Common myeloid progenitor, CD34-positive (primary cell): ENCODE measurements at regions of chr21 and their contacts with region 1.

Region 1: DNA sequence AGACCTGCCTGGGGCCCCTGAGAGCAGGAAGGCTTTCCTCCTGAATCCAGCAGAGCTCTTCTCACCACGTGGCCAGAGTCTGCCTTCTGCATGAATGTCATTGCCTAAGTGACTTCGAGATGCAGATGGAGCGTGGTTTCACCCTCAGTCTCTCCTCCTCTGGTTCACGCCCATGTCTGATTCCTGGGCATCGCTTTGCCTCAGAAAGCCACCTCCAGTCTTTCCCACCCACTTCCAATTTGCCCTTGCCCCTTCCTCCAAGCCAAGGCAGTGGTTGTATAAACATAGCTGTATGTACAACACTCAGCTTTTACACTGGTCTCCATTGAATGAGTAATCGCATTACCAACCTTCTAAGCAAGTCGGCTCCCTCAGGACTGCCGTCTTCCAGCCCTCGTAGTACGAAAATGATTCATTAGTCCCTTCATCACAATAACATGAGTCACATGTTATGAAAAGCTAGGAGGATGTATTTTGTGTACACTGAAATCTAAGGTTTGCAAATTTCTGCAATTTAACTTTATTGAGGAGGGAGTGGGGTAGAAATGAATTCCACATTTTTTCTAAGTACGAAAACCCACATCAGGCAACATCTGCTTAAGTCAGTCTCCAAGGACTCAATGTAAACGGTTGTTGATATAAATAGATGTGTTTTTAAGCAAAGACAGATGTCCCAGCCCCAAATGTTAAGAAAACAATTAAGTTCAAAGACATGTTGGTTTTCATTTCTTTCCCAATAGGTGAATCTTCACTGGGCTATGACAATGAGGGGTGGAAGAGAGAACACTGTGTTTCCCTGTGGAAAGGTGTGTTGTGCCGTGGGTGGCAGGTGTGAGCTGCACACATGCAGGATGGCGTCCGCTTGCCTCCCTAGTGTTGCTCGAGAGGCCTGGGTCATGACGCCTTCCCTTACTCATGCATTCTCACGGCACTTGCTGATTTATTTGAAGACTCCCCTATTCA is 32.3 kb upstream of the ETS2 start:
- DNase-seq: peak in 1 of 3 donors; percentile 29
- H3K4me3 ChIP-seq: no peak overlapping the region
- H3K27ac ChIP-seq: no peak overlapping the region
- H3K4me1 ChIP-seq: peaks cover 9 to 21% (median 15%) of the 10 kb centered on the region in 4 experiments
- H3K27me3 ChIP-seq: no peaks in the 10 kb centered on the region

Region 2: GRCh38 chr21:38699048-38699447 is 74.3 kb before region 1 on chr21:
- CTCF ChIA-PET with region 1: no interaction called
- POLR2A ChIA-PET with region 1: no interaction called
- DNase-seq: peak in 1 of 3 donors; percentile 25
- H3K4me3 ChIP-seq: no peak overlapping the region
- H3K27ac ChIP-seq: no peak overlapping the region
- H3K4me1 ChIP-seq: no peaks in the 10 kb centered on the region
- H3K27me3 ChIP-seq: no peaks in the 10 kb centered on the region

Region 3: GRCh38 chr21:38760017-38760761 is 13.2 kb before region 1 on chr21:
- CTCF ChIA-PET with region 1: interaction called, 12 read pairs
- POLR2A ChIA-PET with region 1: interaction called, 3 read pairs
- DNase-seq: peak; percentile 74 to 88 (median 85)
- H3K4me3 ChIP-seq: no peak overlapping the region
- H3K27ac ChIP-seq: peak overlapping the region in 1 of 2 experiments; percentile 30
- H3K4me1 ChIP-seq: peaks cover 9 to 62% (median 35%) of the 10 kb centered on the region in 4 experiments
- H3K27me3 ChIP-seq: no peaks in the 10 kb centered on the region

Region 4: GRCh38 chr21:38965909-38966504 is 192.6 kb after region 1 on chr21:
- CTCF ChIA-PET with region 1: no interaction called
- POLR2A ChIA-PET with region 1: no interaction called
- DNase-seq: no peak
- H3K4me3 ChIP-seq: no peak overlapping the region
- H3K27ac ChIP-seq: no peak overlapping the region
- H3K4me1 ChIP-seq: peaks cover 0 to 15% (median 7%) of the 10 kb centered on the region in 4 experiments
- H3K27me3 ChIP-seq: no peaks in the 10 kb centered on the region